Natural killer cell (primary cell): ENCODE measurements at regions of chr1 and their contacts with region 1.

Region 1: GRCh38 chr1:206684478-206685333 is at the start of gene MAPKAPK2:
- DNase-seq: peak; percentile 75 to 88
- ATAC-seq: peak; percentile 74 to 86 (median 81)
- H3K4me3 ChIP-seq: peak within 1 kb of the TSS; percentile 92
- H3K4me3 Mint-ChIP-seq: peak within 1 kb of the TSS; percentile 89
- H3K27ac ChIP-seq: peak within 1 kb of the TSS; percentile 83
- H3K27ac Mint-ChIP-seq: peak within 1 kb of the TSS; percentile 96
- H3K4me1 ChIP-seq: peaks cover 47% of the 10 kb centered on the region
- H3K4me1 Mint-ChIP-seq: peaks cover 34 to 49% of the 10 kb centered on the region in 2 donors
- H3K27me3 ChIP-seq: no peaks in the 10 kb centered on the region
- H3K27me3 Mint-ChIP-seq: no peaks in the 10 kb centered on the region
- CTCF ChIP-seq: no peak
- total RNA-seq, gene MAPKAPK2: 137 to 197 (median 178) TPM

Region 2: GRCh38 chr1:206703661-206704060 is 19.0 kb after region 1 on chr1:
- intact Hi-C with region 1: loop called (anchors 2 kb)
- DNase-seq: peak; percentile 39 to 90
- ATAC-seq: peak; percentile 80 to 82 (median 82)
- H3K4me3 ChIP-seq: no peak overlapping the region
- H3K4me3 Mint-ChIP-seq: peak overlapping the region; percentile 74
- H3K27ac ChIP-seq: peak overlapping the region; percentile 51
- H3K27ac Mint-ChIP-seq: peak overlapping the region; percentile 76 to 90
- H3K4me1 ChIP-seq: peaks cover 75% of the 10 kb centered on the region
- H3K4me1 Mint-ChIP-seq: peaks cover 82 to 90% of the 10 kb centered on the region in 2 donors
- H3K27me3 ChIP-seq: no peaks in the 10 kb centered on the region
- H3K27me3 Mint-ChIP-seq: no peaks in the 10 kb centered on the region
- CTCF ChIP-seq: no peak

Region 3: DNA sequence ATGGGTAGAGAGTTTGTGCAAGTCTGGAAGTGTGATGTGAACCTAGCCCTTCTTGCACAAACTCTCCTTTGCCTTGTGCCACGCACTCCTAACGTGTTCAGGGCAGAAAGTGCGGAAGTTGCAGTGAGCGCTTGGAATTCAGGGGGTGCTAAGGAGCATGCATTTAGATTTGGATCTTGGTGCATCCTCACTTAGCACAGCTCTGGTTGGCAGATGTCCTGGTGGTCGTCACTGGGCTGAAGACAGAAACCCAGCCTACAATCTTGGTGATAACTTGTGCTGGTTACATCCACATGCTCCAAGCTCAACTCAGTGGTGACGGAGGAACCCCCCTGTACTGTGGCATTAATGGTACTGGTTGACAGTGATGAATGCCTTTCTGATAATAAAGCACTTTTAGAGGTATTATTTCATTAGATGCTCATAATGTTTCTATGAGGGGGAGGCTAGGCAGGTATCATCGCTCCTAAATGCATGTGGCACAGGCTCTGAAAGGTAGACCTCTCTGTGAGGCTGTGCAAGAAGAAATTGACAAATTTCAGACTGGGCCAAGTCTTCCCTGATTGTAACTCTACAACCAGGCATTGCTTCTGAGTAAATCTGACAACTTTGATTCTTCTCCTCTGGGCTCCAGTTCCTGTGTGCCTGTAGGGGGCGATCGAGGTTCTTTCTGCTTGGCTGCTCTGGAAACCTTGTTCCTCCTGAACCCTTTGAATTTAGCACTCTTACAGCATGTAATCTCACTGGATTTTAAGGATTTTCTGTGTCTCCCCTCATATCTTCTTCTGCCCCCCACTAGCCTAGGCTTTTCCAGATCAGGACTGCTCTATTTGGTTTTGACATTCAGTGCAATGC is 40.6 kb after region 1 on chr1:
- intact Hi-C with region 1: loop called (anchors 5 kb)
- DNase-seq: peak; percentile 55 to 82
- ATAC-seq: peak; percentile 36 to 54 (median 54)
- H3K4me3 ChIP-seq: no peak overlapping the region
- H3K4me3 Mint-ChIP-seq: no peak overlapping the region
- H3K27ac ChIP-seq: no peak overlapping the region
- H3K27ac Mint-ChIP-seq: no peak overlapping the region
- H3K4me1 ChIP-seq: peaks cover 67% of the 10 kb centered on the region
- H3K4me1 Mint-ChIP-seq: peaks cover 63 to 83% of the 10 kb centered on the region in 2 donors
- H3K27me3 ChIP-seq: no peaks in the 10 kb centered on the region
- H3K27me3 Mint-ChIP-seq: no peaks in the 10 kb centered on the region
- CTCF ChIP-seq: peak; percentile 55